Ovary (tissue), 10 donors: ENCODE measurements at regions of chr12 and their contacts with region 1.

Region 1: GRCh38 chr12:101839324-101840283 is 8.8 kb upstream of the GNPTAB start:
- DNase-seq: peak; percentile 42 to 71 (median 50)
- H3K4me3 ChIP-seq: no peak overlapping the region
- H3K27ac ChIP-seq: no peak overlapping the region
- H3K4me1 ChIP-seq: no peaks in the 10 kb centered on the region
- H3K27me3 ChIP-seq: no peaks in the 10 kb centered on the region
- CTCF ChIP-seq: peak; percentile 60 to 78 (median 61)
- EP300 ChIP-seq: no peak
- POLR2A ChIP-seq: no peak

Region 2: GRCh38 chr12:101773650-101774162 is 65.9 kb before region 1 on chr12:
- intact Hi-C with region 1: loop called in 3 of 4 experiments (anchors 5 kb)
- DNase-seq: peak; percentile 37 to 69 (median 57)
- H3K4me3 ChIP-seq: no peak overlapping the region
- H3K27ac ChIP-seq: no peak overlapping the region
- H3K4me1 ChIP-seq: no peaks in the 10 kb centered on the region
- H3K27me3 ChIP-seq: no peaks in the 10 kb centered on the region
- CTCF ChIP-seq: peak; percentile 76 to 84 (median 82)
- EP300 ChIP-seq: no peak
- POLR2A ChIP-seq: no peak